ENCODE measurements at regions of chr2 and their contacts with region 1.

Region 1: DNA sequence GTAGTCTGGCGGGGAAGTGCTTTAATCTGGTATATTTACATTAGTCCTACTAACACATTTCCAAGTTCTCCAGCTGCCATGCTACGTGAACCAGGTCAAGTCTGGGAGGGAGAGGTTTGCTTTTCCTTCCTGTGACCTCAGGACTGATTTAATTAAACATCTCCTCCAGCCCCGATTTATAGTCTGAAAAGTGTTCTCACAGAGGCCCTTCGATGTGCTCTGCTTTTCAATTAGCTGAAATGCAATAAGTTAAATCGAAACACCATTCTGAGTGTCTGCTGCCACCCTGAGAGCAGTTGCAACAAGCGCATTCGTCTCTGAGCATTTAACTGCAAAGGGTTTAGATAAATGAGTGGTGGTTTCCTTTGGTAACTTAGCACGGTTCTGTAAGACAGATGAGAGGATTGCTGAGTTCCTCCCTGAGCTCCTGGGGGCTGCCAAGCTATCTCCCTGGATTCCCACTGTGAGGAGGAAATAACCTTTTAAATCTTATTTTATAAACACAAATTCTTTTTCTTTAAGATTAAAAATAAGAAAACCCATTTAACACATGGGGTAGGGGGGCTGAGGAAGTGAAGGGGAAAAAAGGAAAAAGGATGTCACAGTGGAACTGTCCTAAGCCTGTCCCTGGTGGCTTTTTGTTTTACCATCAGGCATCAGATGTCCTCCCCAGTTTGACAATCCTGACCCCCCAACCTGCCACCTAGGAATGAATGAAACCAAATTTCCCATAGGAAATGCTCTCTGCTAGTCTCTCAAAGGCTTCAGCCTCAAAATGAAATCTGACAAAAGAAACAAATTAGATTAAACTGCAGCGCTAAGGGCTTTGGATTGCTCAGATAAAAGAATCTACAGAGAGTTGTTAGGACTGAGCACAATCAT is 56.5 kb upstream of the CREB1 start:
- DNase-seq: peak; percentile 40
- ATAC-seq: peak; percentile 84

Region 2: GRCh38 chr2:206693399-206694137 is 779.7 kb before region 1 on chr2:
- intact Hi-C with region 1: loop called (anchors 10 kb)
- DNase-seq: no peak
- ATAC-seq: peak; percentile 37

Region 3: DNA sequence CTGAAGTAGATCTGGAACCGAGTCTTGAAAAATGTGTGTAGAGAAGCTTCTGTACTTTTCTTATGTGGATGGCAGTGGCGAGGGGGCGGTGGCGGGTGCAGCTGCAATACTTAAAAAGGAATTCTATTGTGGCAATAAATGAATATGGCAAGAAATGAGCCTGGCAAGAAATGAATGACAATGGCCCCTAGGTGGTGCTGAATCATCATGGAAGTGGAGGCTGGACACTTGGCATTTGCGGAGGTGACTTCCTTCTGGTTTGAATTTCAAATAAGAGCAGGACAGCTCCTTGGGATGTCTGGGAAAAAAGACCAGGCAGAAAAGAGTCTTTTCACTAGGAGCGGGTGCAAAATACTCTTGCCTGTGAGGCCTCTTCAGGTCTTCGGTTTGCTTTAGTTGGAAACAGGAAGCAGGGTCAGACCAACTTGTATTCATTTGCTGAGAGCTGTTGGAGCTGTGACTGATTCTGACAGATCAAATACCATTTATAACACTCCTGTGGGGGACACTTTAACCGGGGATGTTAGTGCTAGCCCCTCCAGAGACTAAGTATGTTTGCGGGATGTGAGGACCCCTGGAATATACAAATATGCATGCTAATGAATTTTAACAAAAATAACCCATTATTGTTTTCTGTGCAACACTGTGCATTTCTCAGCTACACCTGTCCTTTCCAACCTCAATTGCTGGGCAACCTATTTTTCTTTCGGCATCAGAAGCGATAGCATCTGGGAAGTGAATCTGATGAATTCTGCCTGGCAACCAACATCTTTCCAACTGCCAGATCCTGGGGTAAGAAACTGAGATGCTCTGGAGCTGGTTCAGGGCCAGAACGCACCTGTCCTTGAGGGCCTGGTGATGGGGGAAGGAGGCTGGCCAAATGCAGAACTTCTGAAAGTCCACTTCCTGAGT is 672.5 kb before region 1 on chr2:
- intact Hi-C with region 1: loop called (anchors 5 kb)
- DNase-seq: peak; percentile 36
- ATAC-seq: peak; percentile 84

Region 4: DNA sequence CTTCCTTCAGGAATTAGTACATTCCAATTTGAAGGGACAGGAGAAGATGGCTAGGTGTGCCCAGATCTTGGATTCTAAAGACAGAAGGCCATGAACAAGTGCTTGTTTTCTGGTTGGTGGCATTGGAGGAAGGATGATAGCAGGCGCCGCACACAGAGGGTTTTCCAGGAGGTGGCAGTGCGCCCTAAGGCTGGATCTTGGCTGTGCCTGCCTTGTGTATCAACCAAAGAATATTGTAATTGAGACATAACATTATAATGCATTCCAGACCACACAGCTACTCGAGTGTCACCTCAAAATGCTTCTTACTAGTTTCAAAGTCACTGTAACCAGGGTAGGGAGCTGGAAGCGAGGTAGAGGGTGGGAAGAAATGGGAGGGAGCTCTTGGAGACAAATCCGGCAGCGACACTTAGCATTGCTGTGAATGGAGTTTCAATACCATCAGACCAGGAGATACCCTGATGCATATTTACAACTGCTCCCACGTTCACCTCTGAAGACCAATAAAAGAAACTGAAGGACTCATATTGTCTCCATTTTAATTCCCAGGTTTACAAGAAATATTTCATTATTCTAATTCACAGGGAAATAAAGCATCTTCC is 491.4 kb before region 1 on chr2:
- intact Hi-C with region 1: loop called (anchors 5 kb)
- DNase-seq: peak; percentile 79
- ATAC-seq: peak; percentile 94

Region 5: DNA sequence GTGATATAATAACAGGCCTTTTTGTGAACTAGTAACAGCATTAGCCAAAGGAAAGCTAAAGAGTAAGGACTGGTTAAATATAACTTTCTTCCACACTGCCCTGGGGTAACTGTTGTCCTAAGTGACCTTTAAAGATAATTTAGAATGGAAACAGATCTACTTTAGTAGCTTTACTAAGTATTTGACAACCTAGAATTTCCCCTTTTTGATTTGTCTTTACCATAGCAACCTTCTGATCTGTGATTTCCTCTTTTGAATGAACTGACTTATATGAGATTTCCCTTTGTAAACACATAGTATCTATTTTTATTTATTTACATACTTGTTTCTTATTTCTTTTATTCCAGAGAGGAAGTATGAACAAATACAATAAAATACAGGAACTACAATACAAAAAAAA is 297.0 kb before region 1 on chr2:
- intact Hi-C with region 1: loop called (anchors 10 kb)
- DNase-seq: no peak
- ATAC-seq: no peak